SK-N-SH (cell line): ENCODE measurements at regions of chr3 and their contacts with region 1.

Region 1: DNA sequence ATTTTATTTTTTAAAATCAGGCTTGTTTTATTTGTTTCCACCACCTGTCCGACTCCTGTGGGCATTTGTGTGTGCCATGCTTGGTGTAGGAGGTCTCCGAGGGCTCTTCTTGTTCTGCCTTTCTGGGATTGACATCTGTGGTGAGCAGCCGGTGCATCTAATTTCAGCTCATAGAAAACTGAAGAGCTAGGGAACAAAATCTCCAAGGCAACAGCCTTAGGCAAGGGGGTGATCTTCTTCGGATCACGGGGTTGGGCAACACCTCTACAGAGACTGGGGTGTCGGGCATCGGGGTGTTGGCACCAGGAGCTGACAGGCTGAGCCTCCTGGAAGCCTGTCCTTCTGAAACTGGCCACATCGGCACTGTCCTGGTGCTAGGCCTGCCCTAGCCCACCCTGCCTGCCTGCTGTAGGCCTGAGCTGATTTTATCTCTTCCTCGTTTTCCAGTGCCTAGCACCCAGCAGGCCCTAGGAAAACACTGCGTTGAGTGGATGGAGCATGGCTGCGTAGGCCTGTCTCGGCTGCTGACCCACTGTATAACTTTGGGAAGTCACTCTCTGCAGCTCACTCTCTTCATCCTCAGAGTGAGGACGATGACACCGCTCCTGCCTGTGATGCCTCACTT is 10.3 kb downstream of the CHCHD6 start:
- DNase-seq: peak; percentile 82
- H3K4me3 ChIP-seq: no peak overlapping the region
- H3K27ac ChIP-seq: peak overlapping the region in 1 of 2 experiments; percentile 66; a peak in 2 of 4 replicates
- H3K4me1 ChIP-seq: peaks cover 0 to 23% of the 10 kb centered on the region in 2 experiments; a peak in 1 of 4 replicates
- H3K27me3 ChIP-seq: no peaks in the 10 kb centered on the region
- CTCF ChIP-seq: no peak
- EP300 ChIP-seq: no peak
- RAD21 ChIP-seq: no peak; the same call in 1 of the 2 replicates

Region 2: GRCh38 chr3:126607214-126607908 is 107.0 kb before region 1 on chr3:
- CTCF ChIA-PET with region 1: no interaction called
- POLR2A ChIA-PET with region 1: no interaction called
- DNase-seq: no peak
- H3K4me3 ChIP-seq: no peak overlapping the region
- H3K27ac ChIP-seq: no peak overlapping the region
- H3K4me1 ChIP-seq: peaks cover under 1 to 8% of the 10 kb centered on the region in 2 experiments; a peak in 3 of 4 replicates
- H3K27me3 ChIP-seq: no peaks in the 10 kb centered on the region
- CTCF ChIP-seq: no peak
- EP300 ChIP-seq: no peak
- RAD21 ChIP-seq: no peak

Region 3: DNA sequence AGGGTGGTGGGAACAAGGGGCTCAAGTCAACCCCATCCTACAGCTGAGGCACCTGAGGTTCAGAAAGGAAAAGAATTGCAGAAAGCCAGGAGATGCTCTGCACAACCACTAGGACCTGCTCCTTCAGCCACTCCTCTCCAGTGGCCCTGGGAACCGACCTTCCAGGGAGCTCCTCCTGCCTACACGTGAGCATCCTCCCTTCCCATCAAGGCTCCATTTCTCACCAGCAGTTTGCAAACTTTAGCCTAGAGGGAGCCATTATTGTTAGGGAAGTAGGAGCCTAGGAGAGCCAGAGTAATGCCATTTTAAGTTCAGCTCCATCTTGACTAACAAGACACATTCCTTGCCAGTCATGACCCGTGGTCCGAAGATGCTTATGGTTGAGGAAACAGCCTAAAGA is 21.5 kb before region 1 on chr3:
- CTCF ChIA-PET with region 1: no interaction called
- POLR2A ChIA-PET with region 1: no interaction called
- DNase-seq: no peak
- H3K4me3 ChIP-seq: no peak overlapping the region
- H3K27ac ChIP-seq: no peak overlapping the region
- H3K4me1 ChIP-seq: no peaks in the 10 kb centered on the region
- H3K27me3 ChIP-seq: no peaks in the 10 kb centered on the region
- CTCF ChIP-seq: no peak
- EP300 ChIP-seq: no peak
- RAD21 ChIP-seq: no peak

Region 4: GRCh38 chr3:126703512-126704462 is 10.6 kb before region 1 on chr3 and contains the start of gene CHCHD6:
- CTCF ChIA-PET with region 1: interaction called, 11 read pairs
- POLR2A ChIA-PET with region 1: no interaction called
- DNase-seq: peak; percentile 99
- H3K4me3 ChIP-seq: peak within 1 kb of the TSS; percentile 68 to 88
- H3K27ac ChIP-seq: peak within 1 kb of the TSS in 1 of 2 experiments; percentile 60; a peak in 2 of 4 replicates
- H3K4me1 ChIP-seq: peaks cover 6 to 20% of the 10 kb centered on the region in 2 experiments; a peak in 1 of 4 replicates
- H3K27me3 ChIP-seq: 0 out of 2 replicates have a peak, but pooled peaks cover 3% of the 10 kb centered on the region
- CTCF ChIP-seq: peak; percentile 29
- EP300 ChIP-seq: no peak
- RAD21 ChIP-seq: peak; percentile 29
- polyA plus RNA-seq, gene CHCHD6: 42.5 and 45.0 TPM in 2 replicates